Tibial artery (tissue), 4 donors: ENCODE measurements at regions of chr1 and their contacts with region 1.

Region 1: GRCh38 chr1:92831762-92832536 is at the start of gene RPL5:
- DNase-seq: peak; percentile 95 to 97
- H3K4me3 ChIP-seq: peak within 1 kb of the TSS; percentile 75 to 96
- H3K27ac ChIP-seq: peak within 1 kb of the TSS; percentile 87 to 93
- H3K4me1 ChIP-seq: peaks cover 0 to 46% (median 25%) of the 10 kb centered on the region in 4 donors
- H3K27me3 ChIP-seq: no peaks in the 10 kb centered on the region
- CTCF ChIP-seq: peak; percentile 89 to 90

Region 2: DNA sequence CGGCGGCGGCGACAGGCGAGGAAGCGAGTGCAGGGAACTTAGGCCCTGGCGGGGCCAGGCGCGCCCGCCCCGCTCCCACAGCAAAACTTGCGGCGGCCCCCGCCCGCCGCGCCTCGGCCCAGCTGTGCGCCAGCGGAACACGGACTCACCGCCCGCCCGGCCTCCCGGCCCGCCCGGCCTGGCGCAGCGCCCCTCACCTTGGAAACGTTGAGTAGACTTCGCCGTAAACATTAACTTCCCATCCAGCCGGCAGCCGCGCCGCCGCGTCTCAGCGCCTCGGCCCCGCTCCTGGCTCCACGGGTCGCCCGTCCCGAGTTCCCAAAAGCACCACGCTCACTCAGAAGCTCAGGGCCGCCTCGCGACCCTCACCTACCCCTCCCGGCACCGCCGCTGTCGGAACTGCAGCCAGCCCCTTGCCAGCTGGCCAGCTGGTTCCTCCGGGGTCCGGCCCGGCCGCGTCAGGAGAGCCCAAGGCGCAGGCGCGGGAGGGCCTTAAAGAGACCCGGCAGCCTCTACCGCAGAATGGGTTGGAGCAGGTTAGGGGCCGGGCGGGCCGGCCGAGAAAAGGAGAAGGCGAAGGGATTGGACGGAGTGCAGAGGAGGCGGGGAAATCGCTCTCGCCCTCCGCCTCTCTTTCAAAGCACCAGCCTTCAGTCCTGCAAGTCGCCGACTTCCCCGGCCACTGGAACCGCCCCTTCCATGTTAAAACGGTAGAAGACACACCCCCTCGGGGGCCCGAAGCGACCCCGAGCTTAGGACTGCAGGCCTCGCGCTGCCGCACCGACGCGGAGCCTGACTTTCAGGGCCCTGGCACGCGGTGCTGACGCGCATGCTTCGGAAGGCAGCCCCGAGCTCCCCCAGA is 47.1 kb before region 1 on chr1 and contains the start of gene EVI5:
- intact Hi-C with region 1: loop called (anchors 5 kb)
- DNase-seq: peak; percentile 95 to 96
- H3K4me3 ChIP-seq: peak within 1 kb of the TSS; percentile 69 to 79
- H3K27ac ChIP-seq: peak within 1 kb of the TSS; percentile 94
- H3K4me1 ChIP-seq: peaks cover 0 to 38% (median 5%) of the 10 kb centered on the region in 4 donors
- H3K27me3 ChIP-seq: no peaks in the 10 kb centered on the region
- CTCF ChIP-seq: no peak